Endothelial cell of umbilical vein (primary cell): ENCODE measurements at regions of chr6 and their contacts with region 1.

Region 1: DNA sequence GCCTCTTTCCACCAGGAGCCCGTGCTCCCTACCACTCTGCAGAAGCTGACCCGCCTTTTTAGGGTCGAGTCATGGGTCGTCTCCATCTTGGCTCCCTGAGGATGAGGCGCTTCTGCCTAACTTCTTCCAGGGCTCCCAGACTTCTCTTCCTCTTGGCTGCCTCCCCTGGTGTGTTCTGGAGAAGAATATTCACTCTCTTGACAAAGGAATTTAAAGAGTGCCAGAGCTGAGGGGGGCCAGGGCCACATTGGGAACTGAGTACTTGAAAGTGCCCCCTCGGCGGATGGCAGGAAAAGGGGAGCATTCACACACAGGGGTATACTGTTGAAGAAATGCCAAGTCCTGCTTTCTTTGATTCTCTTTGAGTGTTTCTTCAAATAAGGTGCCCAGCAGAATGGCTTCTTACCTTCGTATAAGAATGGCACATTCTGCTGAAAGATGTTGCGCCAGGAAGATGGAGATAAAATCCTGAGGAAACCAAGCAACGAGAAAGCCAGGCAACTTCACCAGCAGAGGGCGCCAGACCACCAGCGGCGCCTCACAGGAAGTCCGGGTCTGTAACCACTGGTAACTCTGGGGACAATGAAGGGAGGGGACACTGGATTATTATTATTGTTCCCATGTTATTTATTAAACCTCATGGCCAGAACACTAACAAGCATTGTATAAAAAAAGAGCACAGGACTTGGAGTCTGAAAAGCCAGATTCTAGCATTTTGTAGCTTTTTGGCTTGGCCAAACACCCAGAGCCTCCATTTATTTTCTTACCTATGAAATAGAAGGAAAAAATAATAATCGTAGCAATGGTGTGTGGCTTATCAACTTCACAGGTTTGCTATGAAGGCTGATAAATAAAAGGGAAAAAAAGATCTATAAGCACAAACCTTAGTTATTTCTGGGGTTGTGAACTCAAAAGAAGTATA is 176.7 kb downstream of the HACE1 start:
- DNase-seq: peak; percentile 56
- H3K4me3 ChIP-seq: no peak overlapping the region
- H3K27ac ChIP-seq: peak overlapping the region; percentile 17
- H3K4me1 ChIP-seq: no peaks in the 10 kb centered on the region
- H3K27me3 ChIP-seq: no peaks in the 10 kb centered on the region
- CTCF ChIP-seq: peak; percentile 78 to 86
- POLR2A ChIP-seq: no peak

Region 2: GRCh38 chr6:104771258-104771832 is 88.4 kb after region 1 on chr6:
- CTCF ChIA-PET with region 1: interaction called, 35 read pairs
- POLR2A ChIA-PET with region 1: no interaction called
- dilution Hi-C with region 1: no loop called
- intact Hi-C with region 1: loop called (anchors 1 kb)
- DNase-seq: peak; percentile 51
- H3K4me3 ChIP-seq: no peak overlapping the region
- H3K27ac ChIP-seq: no peak overlapping the region
- H3K4me1 ChIP-seq: peaks cover 7% of the 10 kb centered on the region
- H3K27me3 ChIP-seq: no peaks in the 10 kb centered on the region
- CTCF ChIP-seq: peak; percentile 14 to 33
- POLR2A ChIP-seq: no peak